Vagina (tissue), 2 donors: ENCODE measurements at regions of chr15 and their contacts with region 1.

Region 1: GRCh38 chr15:79380755-79381497 is 51.2 kb upstream of the MINAR1 start:
- DNase-seq: no peak
- H3K4me3 ChIP-seq: no peak overlapping the region
- H3K27ac ChIP-seq: no peak overlapping the region
- H3K4me1 ChIP-seq: no peaks in the 10 kb centered on the region
- H3K27me3 ChIP-seq: no peaks in the 10 kb centered on the region
- CTCF ChIP-seq: peak; percentile 74 to 89 (median 80)
- POLR2A ChIP-seq: no peak

Region 2: GRCh38 chr15:79007066-79007465 is 373.9 kb before region 1 on chr15:
- intact Hi-C with region 1: no loop called
- DNase-seq: no peak
- H3K4me3 ChIP-seq: no peak overlapping the region
- H3K27ac ChIP-seq: no peak overlapping the region
- H3K4me1 ChIP-seq: no peaks in the 10 kb centered on the region
- H3K27me3 ChIP-seq: no peaks in the 10 kb centered on the region
- CTCF ChIP-seq: peak in 1 of 3 experiments; percentile 12
- POLR2A ChIP-seq: no peak

Region 3: GRCh38 chr15:79989682-79990081 is 608.8 kb after region 1 on chr15:
- intact Hi-C with region 1: loop called (anchors 10 kb)
- DNase-seq: no peak
- H3K4me3 ChIP-seq: no peak overlapping the region
- H3K27ac ChIP-seq: no peak overlapping the region
- H3K4me1 ChIP-seq: no peaks in the 10 kb centered on the region
- H3K27me3 ChIP-seq: no peaks in the 10 kb centered on the region
- CTCF ChIP-seq: no peak
- POLR2A ChIP-seq: no peak